Right lobe of liver (tissue), 6 donors: ENCODE measurements at regions of chr4 and their contacts with region 1.

Region 1: DNA sequence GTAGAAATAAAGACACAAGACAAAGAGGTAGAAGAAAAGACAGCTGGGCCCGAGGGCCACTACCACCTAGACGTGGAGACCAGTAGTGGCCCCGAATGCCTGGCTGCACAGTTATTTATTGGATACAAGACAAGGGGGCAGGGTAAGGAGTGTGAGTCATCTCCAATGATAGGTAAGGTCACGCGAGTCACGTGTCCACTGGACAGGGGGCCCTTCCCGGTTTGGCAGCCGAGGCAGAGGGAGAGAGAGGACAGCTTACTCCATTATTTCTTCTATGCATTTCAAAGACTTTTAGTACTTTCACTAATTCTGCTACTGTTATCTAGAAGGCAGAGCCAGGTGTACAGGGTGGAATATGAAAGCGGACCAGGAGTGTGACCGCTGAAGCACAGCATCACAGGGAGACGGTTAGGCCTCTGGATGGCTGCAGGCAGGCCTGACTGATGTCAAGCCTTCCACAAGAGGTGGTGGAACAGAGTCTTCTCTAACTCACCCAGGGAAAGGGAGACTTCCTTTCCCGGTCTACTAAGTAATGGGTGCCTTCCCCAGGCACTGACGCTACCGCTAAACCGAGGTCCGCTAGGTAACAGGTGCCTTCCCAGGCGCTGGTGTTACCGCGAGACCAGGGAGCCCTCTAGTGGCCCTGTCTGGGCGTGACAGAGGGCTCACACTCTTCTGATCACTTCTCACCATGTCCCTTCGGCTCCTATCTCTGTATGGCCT is 44.9 kb downstream of the ZBTB49 start:
- DNase-seq: peak; percentile 77 to 82 (median 80)
- ATAC-seq: peak; percentile 83 to 94 (median 92)
- H3K4me3 ChIP-seq: no peak overlapping the region
- H3K27ac ChIP-seq: no peak overlapping the region
- H3K4me1 ChIP-seq: no peaks in the 10 kb centered on the region
- H3K27me3 ChIP-seq: no peaks in the 10 kb centered on the region
- CTCF ChIP-seq: peak; percentile 79 to 89 (median 80)
- POLR2A ChIP-seq: no peak

Region 2: DNA sequence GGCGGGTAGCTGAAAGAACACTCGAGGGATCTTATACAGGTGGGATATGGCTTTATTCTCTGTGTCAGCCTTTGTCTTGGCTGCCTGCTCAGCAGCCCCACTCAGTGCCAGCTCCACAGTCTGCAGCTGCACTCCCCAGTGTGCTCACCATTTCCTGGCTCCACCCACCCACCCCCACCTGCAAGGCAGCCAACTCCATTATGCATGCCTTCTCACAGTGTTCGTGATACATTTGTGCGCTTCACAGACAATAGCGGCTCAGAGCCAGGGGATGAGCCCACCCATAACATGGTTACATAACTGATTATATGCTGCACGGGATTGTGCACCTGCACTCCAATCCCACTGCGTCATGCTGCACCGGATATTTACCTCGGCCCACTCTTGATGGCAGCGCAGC is 78.2 kb before region 1 on chr4:
- intact Hi-C with region 1: loop called (anchors 5 to 10 kb)
- DNase-seq: no peak
- ATAC-seq: no peak
- H3K4me3 ChIP-seq: no peak overlapping the region
- H3K27ac ChIP-seq: no peak overlapping the region
- H3K4me1 ChIP-seq: peaks cover 0 to 36% (median 4%) of the 10 kb centered on the region in 4 donors
- H3K27me3 ChIP-seq: no peaks in the 10 kb centered on the region
- CTCF ChIP-seq: no peak
- POLR2A ChIP-seq: no peak